Ascending aorta (tissue), 2 donors: ENCODE measurements at regions of chr4 and their contacts with region 1.

Region 1: DNA sequence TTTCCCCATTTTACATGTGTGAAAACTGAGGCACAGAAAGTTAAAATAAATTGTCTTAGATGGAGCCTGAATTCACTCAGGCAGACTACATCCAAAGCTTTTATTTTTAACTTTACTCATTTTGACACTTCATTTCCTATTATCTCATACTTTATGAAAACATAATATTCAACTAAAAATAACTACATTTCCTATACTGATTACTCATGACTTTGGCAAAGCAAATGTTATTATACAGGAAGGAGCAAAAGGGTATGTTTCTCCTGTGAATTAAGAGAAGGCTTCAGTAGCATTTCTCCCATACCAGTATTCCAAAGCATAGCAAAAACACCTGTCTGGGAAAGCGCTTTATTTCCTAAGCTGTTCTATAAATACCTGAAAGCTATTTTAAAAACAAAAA is 178.6 kb downstream of the ADAMTS3 start:
- DNase-seq: no peak
- H3K4me3 ChIP-seq: no peak overlapping the region
- H3K27ac ChIP-seq: peak overlapping the region; percentile 6 to 58
- H3K4me1 ChIP-seq: peaks cover 0 to 13% of the 10 kb centered on the region in 2 donors
- H3K27me3 ChIP-seq: no peaks in the 10 kb centered on the region
- CTCF ChIP-seq: no peak

Region 2: GRCh38 chr4:72312032-72312650 is 78.3 kb before region 1 on chr4:
- intact Hi-C with region 1: loop called (anchors 5 kb)
- DNase-seq: peak; percentile 17 to 90
- H3K4me3 ChIP-seq: peak overlapping the region in 1 of 2 donors; percentile 29
- H3K27ac ChIP-seq: peak overlapping the region; percentile 64 to 84
- H3K4me1 ChIP-seq: peaks cover 0 to 20% of the 10 kb centered on the region in 2 donors
- H3K27me3 ChIP-seq: no peaks in the 10 kb centered on the region
- CTCF ChIP-seq: no peak

Region 3: GRCh38 chr4:72451349-72451748 is 60.9 kb after region 1 on chr4:
- intact Hi-C with region 1: loop called (anchors 5 kb)
- DNase-seq: peak in 1 of 2 donors; percentile 65
- H3K4me3 ChIP-seq: no peak overlapping the region
- H3K27ac ChIP-seq: peak overlapping the region; percentile 39 to 44
- H3K4me1 ChIP-seq: no peaks in the 10 kb centered on the region
- H3K27me3 ChIP-seq: no peaks in the 10 kb centered on the region
- CTCF ChIP-seq: no peak